Calu3 (cell line): ENCODE measurements at regions of chr5 and their contacts with region 1.

Region 1: GRCh38 chr5:77143998-77144836 is 57.1 kb upstream of the ZBED3 start:
- DNase-seq: peak; percentile 82
- H3K4me3 Mint-ChIP-seq: no peak overlapping the region
- H3K27ac Mint-ChIP-seq: no peak overlapping the region
- H3K4me1 Mint-ChIP-seq: no peaks in the 10 kb centered on the region
- H3K27me3 Mint-ChIP-seq: no peaks in the 10 kb centered on the region
- CTCF ChIP-seq: peak; percentile 82

Region 2: GRCh38 chr5:76771705-76772405 is 372.4 kb before region 1 on chr5:
- CTCF ChIA-PET with region 1: no interaction called
- intact Hi-C with region 1: no loop called
- DNase-seq: no peak
- H3K4me3 Mint-ChIP-seq: no peak overlapping the region
- H3K27ac Mint-ChIP-seq: no peak overlapping the region
- H3K4me1 Mint-ChIP-seq: peaks cover 35% of the 10 kb centered on the region
- H3K27me3 Mint-ChIP-seq: no peaks in the 10 kb centered on the region
- CTCF ChIP-seq: no peak

Region 3: DNA sequence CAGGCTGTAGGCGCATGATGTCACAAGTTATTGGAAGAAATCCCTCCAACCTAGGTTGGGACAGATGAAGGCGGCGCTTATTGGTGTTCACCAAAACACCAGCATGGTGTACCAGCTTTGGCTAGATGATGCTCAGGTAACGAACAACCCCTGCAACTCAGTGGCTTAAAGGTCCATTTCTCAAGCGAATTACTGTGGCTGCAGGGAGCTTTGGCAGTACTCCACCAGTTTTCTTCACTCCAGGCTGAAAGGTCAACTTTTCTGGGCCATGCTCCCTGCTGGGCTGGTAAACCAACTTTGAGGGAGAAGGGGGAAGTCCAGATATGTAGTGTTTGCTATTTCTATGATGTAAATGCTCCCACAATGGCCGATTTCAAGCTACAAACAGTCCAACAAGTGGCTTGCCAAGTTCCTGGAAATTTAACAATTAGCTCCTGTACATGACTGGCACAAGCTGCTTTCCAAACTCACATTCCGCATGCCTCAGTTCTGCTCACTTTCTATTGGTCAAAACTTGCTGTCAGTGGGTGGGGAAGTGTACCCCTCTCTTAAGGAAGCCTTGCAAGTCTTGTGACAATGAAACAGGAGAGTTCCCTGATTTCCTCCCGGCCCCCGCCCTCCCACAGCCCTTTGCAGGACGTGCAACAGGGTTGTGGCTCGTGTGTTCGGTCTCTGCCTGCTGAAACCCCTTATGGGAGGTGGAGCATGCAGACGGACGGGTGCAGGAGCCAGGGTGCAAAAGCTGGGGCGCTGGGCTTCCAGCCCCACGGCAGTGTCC is 56.5 kb before region 1 on chr5:
- CTCF ChIA-PET with region 1: no interaction called
- intact Hi-C with region 1: no loop called
- DNase-seq: peak; percentile 21
- H3K4me3 Mint-ChIP-seq: peak overlapping the region; percentile 90
- H3K27ac Mint-ChIP-seq: peak overlapping the region; percentile 95
- H3K4me1 Mint-ChIP-seq: peaks cover 17% of the 10 kb centered on the region
- H3K27me3 Mint-ChIP-seq: no peaks in the 10 kb centered on the region
- CTCF ChIP-seq: no peak

Region 4: DNA sequence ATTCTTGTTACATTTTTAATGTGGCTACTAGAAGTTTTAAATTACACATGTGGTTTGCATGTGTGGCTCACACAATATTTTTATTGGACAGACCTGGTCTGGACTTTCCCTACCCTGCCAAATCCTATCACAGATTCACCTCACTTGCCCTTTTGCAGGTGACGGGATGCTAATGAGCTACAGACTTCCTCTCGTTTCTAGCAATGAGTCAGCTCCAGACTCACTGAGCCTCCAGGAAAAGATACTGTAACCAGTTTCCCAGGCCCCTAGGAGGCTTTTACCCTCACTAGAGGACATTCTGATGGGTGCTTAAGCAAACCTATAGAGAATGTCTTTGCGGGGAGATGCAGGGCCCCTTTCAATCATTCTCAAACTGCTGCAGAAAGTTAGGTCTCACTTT is 212.5 kb after region 1 on chr5:
- CTCF ChIA-PET with region 1: no interaction called
- intact Hi-C with region 1: no loop called
- DNase-seq: peak; percentile 54
- H3K4me3 Mint-ChIP-seq: no peak overlapping the region
- H3K27ac Mint-ChIP-seq: no peak overlapping the region
- H3K4me1 Mint-ChIP-seq: peaks cover 11% of the 10 kb centered on the region
- H3K27me3 Mint-ChIP-seq: no peaks in the 10 kb centered on the region
- CTCF ChIP-seq: no peak

Region 5: GRCh38 chr5:77437194-77437593 is 293.0 kb after region 1 on chr5:
- CTCF ChIA-PET with region 1: no interaction called
- intact Hi-C with region 1: loop called (anchors 2 kb)
- DNase-seq: no peak
- H3K4me3 Mint-ChIP-seq: no peak overlapping the region
- H3K27ac Mint-ChIP-seq: no peak overlapping the region
- H3K4me1 Mint-ChIP-seq: no peaks in the 10 kb centered on the region
- H3K27me3 Mint-ChIP-seq: no peaks in the 10 kb centered on the region
- CTCF ChIP-seq: no peak

Region 6: GRCh38 chr5:77491783-77492652 is 347.8 kb after region 1 on chr5 and contains the start of gene WDR41:
- CTCF ChIA-PET with region 1: interaction called, 7 read pairs
- intact Hi-C with region 1: loop called (anchors 1 kb)
- DNase-seq: peak; percentile 94
- H3K4me3 Mint-ChIP-seq: peak within 1 kb of the TSS; percentile 90
- H3K27ac Mint-ChIP-seq: peak within 1 kb of the TSS; percentile 88
- H3K4me1 Mint-ChIP-seq: no peaks in the 10 kb centered on the region
- H3K27me3 Mint-ChIP-seq: no peaks in the 10 kb centered on the region
- CTCF ChIP-seq: peak; percentile 87
- total RNA-seq, gene WDR41: 26.5 and 35.4 TPM in 2 replicates